PC-3 (cell line): ENCODE measurements at regions of chr5 and their contacts with region 1.

Region 1: DNA sequence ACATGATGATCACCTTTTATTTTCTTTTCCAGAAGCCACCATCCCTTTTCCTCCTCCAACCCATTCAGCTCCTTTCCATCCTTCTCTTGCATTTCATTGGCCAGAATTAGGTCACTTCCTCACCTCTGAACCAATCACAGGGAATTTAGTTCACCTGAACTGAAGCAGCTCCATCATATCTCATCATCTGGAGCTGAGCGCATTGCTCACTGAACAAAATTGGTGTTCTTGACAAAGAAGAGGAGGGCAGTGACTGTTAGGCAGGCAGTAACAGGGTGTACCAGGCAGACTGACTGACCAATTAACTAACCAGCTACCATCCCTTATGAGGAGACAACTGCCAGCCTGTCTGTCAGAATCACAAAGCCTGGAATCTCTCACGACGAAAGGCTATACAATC is 1.8 kb upstream of the ZNF354A start:
- DNase-seq: no peak
- ATAC-seq: no peak
- H3K4me3 ChIP-seq: no peak overlapping the region
- H3K27ac ChIP-seq: no peak overlapping the region
- H3K4me1 ChIP-seq: 0 out of 2 replicates have a peak, but pooled peaks cover 2% of the 10 kb centered on the region
- H3K27me3 ChIP-seq: no peaks in the 10 kb centered on the region
- CTCF ChIP-seq: no peak

Region 2: GRCh38 chr5:177592010-177592834 is 1140.1 kb before region 1 on chr5 and contains the start of gene TMED9:
- CTCF ChIA-PET with region 1: no interaction called
- POLR2A ChIA-PET with region 1: no interaction called
- intact Hi-C with region 1: no loop called
- DNase-seq: peak; percentile 91
- ATAC-seq: peak; percentile 97
- H3K4me3 ChIP-seq: peak within 1 kb of the TSS; percentile 90
- H3K27ac ChIP-seq: peak within 1 kb of the TSS; percentile 33
- H3K4me1 ChIP-seq: peaks cover 14% of the 10 kb centered on the region
- H3K27me3 ChIP-seq: peaks cover 4% of the 10 kb centered on the region; the same call in 1 of the 2 replicates
- CTCF ChIP-seq: no peak
- total RNA-seq, gene TMED9: 217 and 261 TPM in 2 replicates

Region 3: GRCh38 chr5:178626484-178627258 is 105.6 kb before region 1 on chr5 and contains the start of gene CLK4:
- CTCF ChIA-PET with region 1: interaction called, 4 read pairs
- POLR2A ChIA-PET with region 1: no interaction called
- intact Hi-C with region 1: loop called (anchors 2 kb)
- DNase-seq: peak; percentile 95
- ATAC-seq: peak; percentile 61
- H3K4me3 ChIP-seq: peak within 1 kb of the TSS; percentile 87
- H3K27ac ChIP-seq: peak within 1 kb of the TSS; percentile 79
- H3K4me1 ChIP-seq: peaks cover 40% of the 10 kb centered on the region
- H3K27me3 ChIP-seq: no peaks in the 10 kb centered on the region
- CTCF ChIP-seq: no peak
- total RNA-seq, gene CLK4: 11.3 and 23.8 TPM in 2 replicates

Region 4: DNA sequence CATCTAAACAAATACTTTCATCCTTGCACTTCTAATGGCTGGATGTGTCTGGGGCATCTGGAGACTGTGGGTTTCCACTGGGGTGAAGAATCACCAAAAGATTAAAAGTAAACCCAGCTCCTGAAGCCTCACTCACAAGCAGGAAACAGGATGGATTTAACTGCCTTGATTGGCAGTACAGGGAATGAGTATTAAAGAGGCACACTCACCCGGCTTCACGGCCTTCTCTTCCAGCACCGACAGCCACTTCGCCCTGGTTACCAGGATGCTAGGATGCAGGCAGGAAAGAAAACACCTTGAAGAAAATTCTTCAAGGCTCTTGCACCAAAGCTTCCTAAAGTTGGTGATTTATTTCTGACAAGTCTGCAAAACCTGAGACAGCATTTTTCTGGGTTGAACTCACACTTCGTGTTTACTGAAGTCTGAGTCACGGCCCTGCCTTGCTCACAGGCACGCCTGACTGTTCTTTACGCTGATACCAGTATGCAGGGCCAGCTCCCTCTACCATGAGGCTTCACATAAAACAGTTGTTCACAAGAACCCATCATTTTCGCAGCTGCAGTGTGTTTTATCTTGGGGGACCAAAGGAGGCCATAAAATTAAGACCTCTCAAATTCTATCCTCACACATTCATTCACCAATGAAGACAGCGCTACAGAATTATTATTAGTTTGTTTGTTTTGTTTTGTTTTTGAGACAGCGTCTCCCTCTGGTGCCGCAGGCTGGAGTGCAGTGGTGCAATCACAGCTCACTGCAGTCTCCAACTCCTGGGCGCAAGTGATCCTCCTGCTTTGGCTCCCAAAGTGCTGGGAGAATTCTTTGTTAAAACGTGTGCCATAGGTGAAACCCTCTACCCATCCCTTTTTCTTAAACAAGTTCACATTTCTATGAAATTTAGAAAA is 54.8 kb after region 1 on chr5:
- CTCF ChIA-PET with region 1: no interaction called
- POLR2A ChIA-PET with region 1: no interaction called
- intact Hi-C with region 1: loop called (anchors 1 kb)
- DNase-seq: peak; percentile 98
- ATAC-seq: peak; percentile 93
- H3K4me3 ChIP-seq: peak overlapping the region; percentile 5; the same call in 1 of the 2 replicates
- H3K27ac ChIP-seq: peak overlapping the region; percentile 86
- H3K4me1 ChIP-seq: peaks cover 43% of the 10 kb centered on the region
- H3K27me3 ChIP-seq: no peaks in the 10 kb centered on the region
- CTCF ChIP-seq: peak; percentile 36; the same call in 1 of the 2 replicates

Region 5: DNA sequence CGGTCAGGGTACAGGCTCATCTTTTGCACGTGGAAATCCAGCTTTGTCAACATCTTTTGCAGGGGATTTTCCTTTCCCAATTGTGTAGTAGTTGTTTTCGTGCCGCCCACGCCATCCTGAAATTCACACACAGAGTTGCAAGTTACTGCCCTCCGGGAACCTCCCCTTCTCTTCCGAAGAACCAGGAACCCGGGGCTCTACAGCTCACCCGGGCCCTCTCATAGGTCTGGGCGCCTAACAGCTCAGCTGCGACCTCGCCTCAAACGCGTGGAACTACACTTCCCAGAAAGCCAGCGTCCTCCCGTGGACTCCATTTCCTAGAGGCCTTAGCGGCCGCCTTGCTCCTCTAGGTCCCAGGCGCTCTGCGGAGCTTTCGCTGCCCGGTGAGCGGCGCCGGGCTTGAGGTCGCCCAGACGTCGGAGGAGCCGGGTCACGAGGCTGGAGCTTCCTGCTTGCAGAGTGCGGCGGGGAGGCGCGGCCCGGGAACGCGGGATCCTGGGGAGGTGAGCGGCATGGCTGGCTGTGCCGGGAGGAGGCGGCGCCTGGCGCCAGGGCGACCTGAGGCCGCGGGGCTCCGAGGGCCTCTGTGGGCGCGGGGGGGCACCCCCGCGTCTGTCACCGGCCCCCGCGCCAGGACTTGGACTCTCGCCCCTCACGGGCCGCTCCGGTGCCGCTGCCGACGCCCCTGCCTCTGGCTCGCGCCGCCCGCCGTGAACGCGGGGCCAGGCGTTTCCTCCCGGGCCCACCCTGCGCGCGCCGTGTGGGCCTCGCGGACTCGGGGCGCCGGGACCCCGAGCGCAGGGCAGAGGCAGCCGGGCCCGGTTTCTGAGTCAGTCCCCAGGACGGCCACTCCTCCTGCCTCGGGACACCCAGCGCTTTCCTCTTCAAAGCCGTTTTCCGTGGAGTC is 127.6 kb after region 1 on chr5 and contains the start of gene ZNF354B:
- CTCF ChIA-PET with region 1: interaction called, 15 read pairs
- POLR2A ChIA-PET with region 1: interaction called, 6 read pairs
- intact Hi-C with region 1: loop called (anchors 1 kb)
- DNase-seq: peak; percentile 93
- ATAC-seq: peak; percentile 96
- H3K4me3 ChIP-seq: peak within 1 kb of the TSS; percentile 77
- H3K27ac ChIP-seq: 0 out of 2 replicates have a peak within 1 kb of the TSS, but pooled peaks have one; percentile 24
- H3K4me1 ChIP-seq: peaks cover 5% of the 10 kb centered on the region; the same call in 1 of the 2 replicates
- H3K27me3 ChIP-seq: no peaks in the 10 kb centered on the region
- CTCF ChIP-seq: no peak
- total RNA-seq, gene ZNF354B: 5.9 and 6.2 TPM in 2 replicates